ENCODE measurements at regions of chr12 and their contacts with region 1.

Region 1: GRCh38 chr12:54958048-54958658 is 26.4 kb downstream of the TESPA1 start:
- H3K4me3 ChIP-seq: no peak overlapping the region
- H3K27ac ChIP-seq: no peak overlapping the region
- H3K4me1 ChIP-seq: no peaks in the 10 kb centered on the region
- CTCF ChIP-seq: peak; percentile 49; the same call in 1 of the 2 replicates

Region 2: DNA sequence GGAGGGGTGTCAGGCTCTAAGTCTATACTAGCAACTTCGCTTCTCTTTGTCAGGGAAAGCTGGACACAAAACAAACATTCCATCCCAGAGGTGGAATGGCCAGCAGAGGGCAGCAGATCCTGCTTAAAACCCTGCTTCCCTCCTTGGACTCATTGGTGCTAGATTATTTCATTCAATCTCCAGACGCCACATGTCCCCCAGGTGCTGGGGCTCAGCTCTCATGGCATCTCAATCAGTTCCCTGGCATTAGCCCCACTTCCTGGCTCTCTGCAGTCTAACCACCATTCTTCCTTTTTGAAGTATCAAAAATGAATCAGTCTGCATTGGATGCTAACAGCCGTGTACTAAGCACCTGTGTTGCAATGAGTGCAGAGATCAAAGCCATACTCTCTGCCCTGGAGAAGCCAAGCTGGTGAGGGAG is 361.6 kb before region 1 on chr12:
- CTCF ChIA-PET with region 1: interaction called, 11 read pairs
- POLR2A ChIA-PET with region 1: no interaction called
- H3K4me3 ChIP-seq: no peak overlapping the region
- H3K27ac ChIP-seq: no peak overlapping the region
- H3K4me1 ChIP-seq: no peaks in the 10 kb centered on the region
- CTCF ChIP-seq: peak; percentile 49; the same call in 1 of the 2 replicates

Region 3: DNA sequence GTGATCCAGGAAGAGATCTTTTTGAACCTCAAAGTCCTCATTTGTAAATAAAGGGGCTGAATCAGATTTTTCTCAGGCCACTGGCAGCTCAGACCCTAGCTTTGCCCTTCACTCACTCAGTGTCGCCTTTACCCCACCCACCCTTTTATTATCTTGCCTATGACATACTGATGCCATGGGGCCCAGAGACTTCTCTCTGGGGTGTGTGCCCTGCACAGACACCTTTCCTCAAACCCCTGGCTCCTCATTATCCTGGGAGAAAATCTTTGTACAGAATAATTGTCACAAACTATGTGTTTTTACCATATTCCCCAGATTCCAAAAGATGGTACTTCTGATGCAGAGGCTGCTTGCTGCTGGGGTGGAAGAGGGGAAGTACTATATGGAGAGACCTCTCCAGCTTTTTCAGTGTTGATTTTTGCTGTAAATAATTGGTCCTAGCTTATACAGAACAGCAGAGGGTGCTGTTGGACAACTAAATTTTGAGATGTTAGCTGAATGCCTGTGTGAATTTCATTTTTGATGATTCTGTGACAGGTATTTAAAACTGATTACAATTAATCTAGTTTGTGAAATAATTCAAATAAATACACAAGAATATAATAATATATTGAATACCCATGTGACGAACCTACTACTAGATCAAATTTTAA is 256.1 kb before region 1 on chr12:
- CTCF ChIA-PET with region 1: interaction called, 41 read pairs
- POLR2A ChIA-PET with region 1: no interaction called
- H3K4me3 ChIP-seq: no peak overlapping the region
- H3K27ac ChIP-seq: no peak overlapping the region
- H3K4me1 ChIP-seq: no peaks in the 10 kb centered on the region
- CTCF ChIP-seq: no peak

Region 4: GRCh38 chr12:54749191-54749818 is 208.8 kb before region 1 on chr12:
- CTCF ChIA-PET with region 1: interaction called, 95 read pairs
- POLR2A ChIA-PET with region 1: no interaction called
- H3K4me3 ChIP-seq: no peak overlapping the region
- H3K27ac ChIP-seq: no peak overlapping the region
- H3K4me1 ChIP-seq: no peaks in the 10 kb centered on the region
- CTCF ChIP-seq: peak; percentile 45; the same call in 1 of the 2 replicates

Region 5: DNA sequence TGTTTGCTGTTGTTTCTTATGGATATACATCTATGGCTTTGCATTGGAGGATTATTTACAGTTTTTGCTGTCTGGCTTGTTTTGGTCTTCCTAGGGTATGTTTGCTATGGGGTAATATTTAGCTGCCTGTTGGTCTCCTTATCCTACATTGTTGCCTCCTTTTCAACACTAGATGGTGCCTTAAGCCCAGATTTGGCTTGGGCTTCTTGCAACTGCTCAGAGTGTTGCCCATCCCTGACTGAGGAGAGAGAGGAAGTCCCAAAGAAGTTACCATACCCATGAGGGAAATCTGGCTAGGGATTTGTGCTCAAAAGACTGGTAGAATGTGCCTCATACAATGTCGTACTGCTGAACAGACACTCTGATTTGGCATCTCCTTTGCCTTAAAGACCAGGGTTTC is 198.4 kb before region 1 on chr12:
- CTCF ChIA-PET with region 1: interaction called, 32 read pairs
- POLR2A ChIA-PET with region 1: no interaction called
- H3K4me3 ChIP-seq: no peak overlapping the region
- H3K27ac ChIP-seq: no peak overlapping the region
- H3K4me1 ChIP-seq: no peaks in the 10 kb centered on the region
- CTCF ChIP-seq: peak; percentile 59

Region 6: DNA sequence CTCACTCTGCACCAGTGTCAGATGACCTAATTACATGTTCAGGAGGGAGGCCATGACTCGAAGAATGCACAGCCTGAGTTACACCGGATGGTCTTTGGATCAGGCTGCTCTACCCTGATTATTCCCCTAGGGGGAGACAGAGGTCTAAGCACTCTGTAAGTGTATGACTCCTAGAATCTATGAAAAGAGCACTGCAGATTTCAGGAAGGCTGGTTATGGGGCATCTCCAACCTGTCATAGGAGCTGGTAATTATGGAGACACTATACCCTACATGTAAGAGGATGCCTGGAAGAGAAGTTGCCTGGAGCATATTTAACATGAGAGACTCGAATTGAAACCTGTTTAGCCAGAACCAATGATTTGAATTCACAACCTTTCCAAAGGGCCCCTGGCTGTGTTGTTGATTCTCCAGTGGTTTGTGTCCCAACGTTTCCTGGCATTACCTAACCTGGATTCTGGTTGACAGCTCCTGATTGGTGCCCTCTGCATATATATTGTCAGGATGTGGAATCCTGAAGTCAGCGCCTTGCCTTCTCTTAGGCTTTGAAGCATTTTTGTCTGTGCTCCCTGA is 104.1 kb before region 1 on chr12 and contains the start of gene MUCL1:
- CTCF ChIA-PET with region 1: interaction called, 26 read pairs
- POLR2A ChIA-PET with region 1: no interaction called
- H3K4me3 ChIP-seq: no peak within 1 kb of the TSS
- H3K27ac ChIP-seq: no peak within 1 kb of the TSS
- H3K4me1 ChIP-seq: no peaks in the 10 kb centered on the region
- CTCF ChIP-seq: no peak; the same call in 1 of the 2 replicates